PC-3 (cell line): ENCODE measurements at regions of chr6 and their contacts with region 1.

Region 1: GRCh38 chr6:24991810-24992467 is 56.2 kb upstream of the RIPOR2 start:
- DNase-seq: peak; percentile 72
- ATAC-seq: peak; percentile 68
- H3K4me3 ChIP-seq: no peak overlapping the region
- H3K27ac ChIP-seq: no peak overlapping the region
- H3K4me1 ChIP-seq: peaks cover 10% of the 10 kb centered on the region
- H3K27me3 ChIP-seq: no peaks in the 10 kb centered on the region
- CTCF ChIP-seq: peak; percentile 92

Region 2: GRCh38 chr6:24774696-24775519 is 217.0 kb before region 1 on chr6 and contains the start of gene GMNN:
- CTCF ChIA-PET with region 1: no interaction called
- POLR2A ChIA-PET with region 1: no interaction called
- intact Hi-C with region 1: loop called (anchors 10 kb)
- DNase-seq: peak; percentile 95
- ATAC-seq: peak; percentile 91
- H3K4me3 ChIP-seq: peak within 1 kb of the TSS; percentile 97
- H3K27ac ChIP-seq: peak within 1 kb of the TSS; percentile 89
- H3K4me1 ChIP-seq: peaks cover 29% of the 10 kb centered on the region
- H3K27me3 ChIP-seq: no peaks in the 10 kb centered on the region
- CTCF ChIP-seq: no peak
- total RNA-seq, gene GMNN: 44.6 and 57.4 TPM in 2 replicates

Region 3: GRCh38 chr6:25107218-25107617 is 115.3 kb after region 1 on chr6:
- CTCF ChIA-PET with region 1: no interaction called
- POLR2A ChIA-PET with region 1: interaction called, 15 read pairs
- intact Hi-C with region 1: no loop called
- DNase-seq: no peak
- ATAC-seq: no peak
- H3K4me3 ChIP-seq: no peak overlapping the region
- H3K27ac ChIP-seq: no peak overlapping the region
- H3K4me1 ChIP-seq: peaks cover 17% of the 10 kb centered on the region
- H3K27me3 ChIP-seq: no peaks in the 10 kb centered on the region
- CTCF ChIP-seq: no peak